ENCODE measurements at regions of chr12 and their contacts with region 1.

Region 1: DNA sequence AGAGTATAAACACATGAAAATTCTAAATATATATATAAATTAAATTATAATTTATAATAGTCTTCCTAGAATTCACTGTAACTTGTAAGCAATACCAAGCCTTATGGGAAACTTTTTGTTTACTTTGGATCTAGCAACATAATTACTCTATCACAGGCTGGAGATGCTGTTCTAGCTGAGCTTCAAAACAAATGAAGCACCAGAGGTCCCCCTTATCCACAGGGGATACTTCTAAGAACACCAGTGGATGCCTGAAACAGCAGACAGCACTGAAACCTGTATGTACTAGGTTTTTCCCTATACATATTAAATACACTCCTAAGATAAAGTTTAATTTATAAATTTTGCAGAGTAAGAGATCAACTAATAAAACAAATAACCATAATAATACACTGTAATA is 96.6 kb downstream of the CDK17 start:
- DNase-seq: no peak
- ATAC-seq: peak; percentile 33

Region 2: DNA sequence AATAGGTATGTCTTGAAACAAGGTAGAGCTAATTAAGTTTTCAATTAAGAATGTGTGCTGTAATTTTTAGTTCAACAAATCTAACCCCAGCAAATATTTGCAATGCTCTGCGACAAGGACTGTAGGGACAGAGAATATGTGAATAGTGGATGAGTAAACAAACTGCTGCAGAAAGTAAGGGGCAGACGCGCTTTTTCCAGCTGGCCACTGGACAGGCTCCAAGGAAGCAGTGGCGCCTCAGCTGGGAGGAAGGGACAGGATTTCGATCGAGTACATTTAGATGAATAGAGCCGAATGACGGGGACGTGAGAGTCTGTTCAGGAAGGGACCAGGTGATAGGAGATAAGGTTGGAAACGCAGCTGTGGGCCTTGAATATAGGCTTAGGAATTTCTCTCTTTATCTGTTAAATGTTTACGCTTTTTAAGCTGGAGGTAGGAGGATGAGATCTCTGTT is 40.2 kb before region 1 on chr12:
- intact Hi-C with region 1: loop called (anchors 5 kb)
- DNase-seq: no peak
- ATAC-seq: no peak

Region 3: GRCh38 chr12:96271469-96272199 is 32.0 kb before region 1 on chr12:
- intact Hi-C with region 1: loop called (anchors 1 kb)
- DNase-seq: no peak
- ATAC-seq: no peak

Region 4: DNA sequence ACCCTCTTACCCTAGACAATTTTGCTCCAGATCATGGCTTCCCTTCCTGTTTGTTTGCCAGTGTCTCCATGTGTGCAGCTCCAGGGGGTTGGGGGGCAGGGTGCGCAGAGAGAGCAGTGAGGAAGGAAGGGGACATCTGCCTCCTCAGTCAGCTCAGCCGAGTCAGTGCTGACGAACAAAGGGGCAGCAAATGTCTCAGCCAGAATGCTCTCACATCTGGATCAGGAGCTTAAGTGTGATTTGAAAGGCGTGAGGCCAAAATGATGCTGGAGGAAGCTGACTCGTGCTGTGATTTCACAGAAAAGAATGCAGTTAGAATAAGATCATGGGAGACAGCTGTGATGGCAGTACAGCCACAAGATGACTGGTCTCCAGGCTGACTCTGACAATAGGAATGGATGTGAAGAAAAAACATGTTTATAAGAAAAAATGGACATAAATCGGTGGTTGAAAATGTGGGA is 123.6 kb after region 1 on chr12:
- intact Hi-C with region 1: no loop called
- DNase-seq: peak; percentile 38
- ATAC-seq: peak; percentile 91

Region 5: GRCh38 chr12:96698521-96698920 is 394.9 kb after region 1 on chr12:
- intact Hi-C with region 1: no loop called
- DNase-seq: no peak
- ATAC-seq: no peak

Measured in left ventricle myocardium superior (tissue), 1 donor.